Activated naive CD4-positive, alpha-beta T cell treated with anti-CD3 and anti-CD28 coated beads for 36 hours (primary cell): ENCODE measurements at regions of chr6 and their contacts with region 1.

Region 1: DNA sequence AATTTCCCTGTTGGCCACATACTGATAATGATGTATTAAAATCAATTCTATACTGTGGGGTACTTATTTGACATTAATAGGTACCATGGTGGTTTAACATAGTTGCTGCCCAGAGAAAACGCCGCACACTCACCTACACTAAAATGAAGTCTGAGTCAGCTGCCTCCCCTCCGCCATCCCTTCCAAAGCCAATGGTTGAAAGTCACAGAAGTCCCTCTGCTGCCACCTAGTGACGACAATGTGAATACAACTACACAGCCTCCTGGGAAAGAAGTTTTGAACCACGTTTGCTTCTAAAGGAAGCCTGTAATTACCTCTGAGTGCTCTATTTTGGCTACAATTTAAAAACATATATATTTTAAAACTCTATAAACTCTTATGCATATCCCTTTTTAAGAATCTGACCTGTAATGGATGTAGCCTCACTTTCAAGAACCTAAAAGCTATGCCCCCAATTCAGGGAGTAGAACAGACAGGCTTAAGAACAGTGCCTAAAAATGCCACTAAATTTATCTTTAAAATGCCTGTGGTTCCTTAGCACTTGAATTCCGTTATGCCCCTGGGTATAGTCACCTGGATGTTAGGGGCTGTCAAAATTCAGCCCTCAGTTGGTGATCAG is 20.6 kb upstream of the ECI2 start:
- DNase-seq: peak; percentile 92
- H3K4me3 Mint-ChIP-seq: no peak overlapping the region
- H3K27ac Mint-ChIP-seq: no peak overlapping the region
- H3K4me1 Mint-ChIP-seq: peaks cover 6% of the 10 kb centered on the region
- H3K27me3 Mint-ChIP-seq: peaks cover 3% of the 10 kb centered on the region

Region 2: GRCh38 chr6:3269281-3269975 is 886.5 kb before region 1 on chr6:
- CTCF ChIA-PET with region 1: no interaction called
- intact Hi-C with region 1: no loop called
- DNase-seq: no peak
- H3K4me3 Mint-ChIP-seq: no peak overlapping the region
- H3K27ac Mint-ChIP-seq: no peak overlapping the region
- H3K4me1 Mint-ChIP-seq: peaks cover 32% of the 10 kb centered on the region
- H3K27me3 Mint-ChIP-seq: no peaks in the 10 kb centered on the region

Region 3: GRCh38 chr6:3939964-3940363 is 216.0 kb before region 1 on chr6:
- CTCF ChIA-PET with region 1: no interaction called
- intact Hi-C with region 1: loop called (anchors 10 kb)
- DNase-seq: no peak
- H3K4me3 Mint-ChIP-seq: no peak overlapping the region
- H3K27ac Mint-ChIP-seq: no peak overlapping the region
- H3K4me1 Mint-ChIP-seq: peaks cover 3% of the 10 kb centered on the region
- H3K27me3 Mint-ChIP-seq: peaks cover 30% of the 10 kb centered on the region

Region 4: GRCh38 chr6:4008324-4009047 is 147.5 kb before region 1 on chr6:
- CTCF ChIA-PET with region 1: interaction called, 4 read pairs
- intact Hi-C with region 1: loop called (anchors 1 kb)
- DNase-seq: peak; percentile 18
- H3K4me3 Mint-ChIP-seq: no peak overlapping the region
- H3K27ac Mint-ChIP-seq: no peak overlapping the region
- H3K4me1 Mint-ChIP-seq: peaks cover 48% of the 10 kb centered on the region
- H3K27me3 Mint-ChIP-seq: no peaks in the 10 kb centered on the region

Region 5: GRCh38 chr6:4030669-4031068 is 125.3 kb before region 1 on chr6:
- CTCF ChIA-PET with region 1: no interaction called
- intact Hi-C with region 1: no loop called
- DNase-seq: no peak
- H3K4me3 Mint-ChIP-seq: no peak overlapping the region
- H3K27ac Mint-ChIP-seq: peak overlapping the region; percentile 31
- H3K4me1 Mint-ChIP-seq: peaks cover 73% of the 10 kb centered on the region
- H3K27me3 Mint-ChIP-seq: no peaks in the 10 kb centered on the region

Region 6: GRCh38 chr6:4055420-4056041 is 100.4 kb before region 1 on chr6:
- CTCF ChIA-PET with region 1: interaction called, 11 read pairs
- intact Hi-C with region 1: loop called (anchors 1 kb)
- DNase-seq: peak; percentile 23
- H3K4me3 Mint-ChIP-seq: no peak overlapping the region
- H3K27ac Mint-ChIP-seq: peak overlapping the region; percentile 50
- H3K4me1 Mint-ChIP-seq: peaks cover 21% of the 10 kb centered on the region
- H3K27me3 Mint-ChIP-seq: no peaks in the 10 kb centered on the region

Region 7: GRCh38 chr6:4196359-4196758 is 40.4 kb after region 1 on chr6:
- CTCF ChIA-PET with region 1: no interaction called
- intact Hi-C with region 1: no loop called
- DNase-seq: no peak
- H3K4me3 Mint-ChIP-seq: no peak overlapping the region
- H3K27ac Mint-ChIP-seq: no peak overlapping the region
- H3K4me1 Mint-ChIP-seq: no peaks in the 10 kb centered on the region
- H3K27me3 Mint-ChIP-seq: peaks cover 2% of the 10 kb centered on the region

Region 8: GRCh38 chr6:4210629-4211423 is 54.9 kb after region 1 on chr6:
- CTCF ChIA-PET with region 1: interaction called, 6 read pairs
- intact Hi-C with region 1: loop called (anchors 5 kb)
- DNase-seq: peak; percentile 81
- H3K4me3 Mint-ChIP-seq: no peak overlapping the region
- H3K27ac Mint-ChIP-seq: no peak overlapping the region
- H3K4me1 Mint-ChIP-seq: peaks cover 18% of the 10 kb centered on the region
- H3K27me3 Mint-ChIP-seq: no peaks in the 10 kb centered on the region

Region 9: GRCh38 chr6:4319981-4320683 is 164.2 kb after region 1 on chr6:
- CTCF ChIA-PET with region 1: no interaction called
- intact Hi-C with region 1: no loop called
- DNase-seq: no peak
- H3K4me3 Mint-ChIP-seq: no peak overlapping the region
- H3K27ac Mint-ChIP-seq: no peak overlapping the region
- H3K4me1 Mint-ChIP-seq: no peaks in the 10 kb centered on the region
- H3K27me3 Mint-ChIP-seq: peaks cover 13% of the 10 kb centered on the region